CD4-positive, alpha-beta T cell (primary cell): ENCODE measurements at regions of chr22 and their contacts with region 1.

Region 1: DNA sequence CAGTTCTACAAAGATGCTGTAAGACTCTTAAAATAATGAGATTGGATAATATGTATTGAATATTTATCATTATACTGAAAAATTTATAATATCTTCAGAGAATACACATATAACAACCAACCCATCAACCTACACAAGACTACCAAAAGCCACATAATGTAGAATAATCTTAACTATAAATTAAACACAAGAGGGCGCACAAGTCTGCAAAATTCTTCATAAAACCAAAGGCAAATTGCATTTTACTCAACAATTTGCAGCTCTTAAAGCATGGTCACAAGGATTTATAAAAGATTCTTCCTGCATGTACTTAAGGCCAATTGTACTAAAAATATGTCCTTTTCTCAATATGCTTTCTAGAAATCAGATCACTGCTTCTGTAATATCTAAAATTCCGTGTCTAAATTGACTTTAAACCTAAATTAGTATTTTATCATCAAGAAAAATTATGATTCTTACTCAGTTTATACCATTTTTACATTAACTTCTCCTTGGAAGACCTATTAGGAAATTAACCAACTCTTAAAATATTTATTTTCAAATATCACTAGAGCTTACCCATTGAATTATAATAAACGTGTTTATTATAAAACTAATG is 79.0 kb downstream of the TTC28 start:
- DNase-seq: peak in 4 of 14 experiments; percentile 11 to 70 (median 66)
- ATAC-seq: no peak
- H3K4me3 ChIP-seq: no peak overlapping the region
- H3K4me3 Mint-ChIP-seq: no peak overlapping the region
- H3K27ac ChIP-seq: no peak overlapping the region
- H3K27ac Mint-ChIP-seq: no peak overlapping the region
- H3K4me1 ChIP-seq: no peaks in the 10 kb centered on the region
- H3K4me1 Mint-ChIP-seq: no peaks in the 10 kb centered on the region
- H3K27me3 ChIP-seq: peaks cover 0 to 12% of the 10 kb centered on the region in 2 experiments
- H3K27me3 Mint-ChIP-seq: peaks cover 46% of the 10 kb centered on the region
- CTCF ChIP-seq: peak; percentile 82

Region 2: DNA sequence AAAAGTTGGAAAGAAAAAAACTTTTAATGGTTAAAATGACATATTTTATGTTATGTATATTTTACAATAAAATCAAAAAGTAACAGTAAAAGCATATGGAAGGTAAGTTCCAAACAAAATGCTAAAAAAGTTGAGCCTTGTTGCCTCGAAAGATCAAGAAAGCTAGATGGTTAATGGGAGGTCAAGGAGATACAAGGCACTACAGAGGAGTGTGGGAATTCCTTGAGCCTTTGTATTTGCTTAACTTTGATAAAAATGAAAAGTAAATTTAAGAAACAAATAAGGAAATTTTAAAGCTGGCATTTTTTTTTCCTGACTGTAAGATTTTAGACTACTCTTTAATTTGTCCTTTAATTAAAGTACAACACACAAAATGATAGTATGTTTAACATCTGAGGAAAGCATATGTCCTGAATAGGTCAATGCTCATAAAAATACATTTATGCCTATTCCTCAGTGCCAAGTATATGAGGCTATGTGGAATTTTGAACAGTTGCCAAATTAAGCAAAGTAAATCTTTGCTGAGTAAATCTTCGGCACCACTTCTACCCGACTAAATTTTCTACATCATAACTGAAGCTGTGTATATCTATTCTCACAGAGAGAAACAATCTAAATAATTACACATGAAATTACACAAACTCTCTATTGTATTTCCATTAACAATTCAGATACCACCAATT is 29.8 kb before region 1 on chr22:
- CTCF ChIA-PET with region 1: no interaction called
- POLR2A ChIA-PET with region 1: no interaction called
- intact Hi-C with region 1: no loop called
- DNase-seq: no peak
- ATAC-seq: no peak
- H3K4me3 ChIP-seq: no peak overlapping the region
- H3K4me3 Mint-ChIP-seq: no peak overlapping the region
- H3K27ac ChIP-seq: no peak overlapping the region
- H3K27ac Mint-ChIP-seq: no peak overlapping the region
- H3K4me1 ChIP-seq: no peaks in the 10 kb centered on the region
- H3K4me1 Mint-ChIP-seq: no peaks in the 10 kb centered on the region
- H3K27me3 ChIP-seq: peaks cover 0 to 3% of the 10 kb centered on the region in 2 experiments
- H3K27me3 Mint-ChIP-seq: peaks cover 17% of the 10 kb centered on the region
- CTCF ChIP-seq: no peak

Region 3: GRCh38 chr22:28585324-28585723 is 15.3 kb before region 1 on chr22:
- CTCF ChIA-PET with region 1: no interaction called
- POLR2A ChIA-PET with region 1: no interaction called
- intact Hi-C with region 1: no loop called
- DNase-seq: no peak
- ATAC-seq: no peak
- H3K4me3 ChIP-seq: no peak overlapping the region
- H3K4me3 Mint-ChIP-seq: no peak overlapping the region
- H3K27ac ChIP-seq: no peak overlapping the region
- H3K27ac Mint-ChIP-seq: no peak overlapping the region
- H3K4me1 ChIP-seq: no peaks in the 10 kb centered on the region
- H3K4me1 Mint-ChIP-seq: no peaks in the 10 kb centered on the region
- H3K27me3 ChIP-seq: peaks cover 0 to 8% of the 10 kb centered on the region in 2 experiments
- H3K27me3 Mint-ChIP-seq: peaks cover 16% of the 10 kb centered on the region
- CTCF ChIP-seq: no peak

Region 4: GRCh38 chr22:28674121-28674563 is 73.5 kb after region 1 on chr22:
- CTCF ChIA-PET with region 1: no interaction called
- POLR2A ChIA-PET with region 1: no interaction called
- intact Hi-C with region 1: loop called in 1 of 2 experiments (anchors 5 kb)
- DNase-seq: peak in 8 of 14 experiments; percentile 8 to 85 (median 50)
- ATAC-seq: peak; percentile 97
- H3K4me3 ChIP-seq: no peak overlapping the region
- H3K4me3 Mint-ChIP-seq: peak overlapping the region; percentile 90
- H3K27ac ChIP-seq: no peak overlapping the region
- H3K27ac Mint-ChIP-seq: peak overlapping the region; percentile 96
- H3K4me1 ChIP-seq: peaks cover 14% of the 10 kb centered on the region
- H3K4me1 Mint-ChIP-seq: peaks cover 40% of the 10 kb centered on the region
- H3K27me3 ChIP-seq: peaks cover 35 to 71% of the 10 kb centered on the region in 2 experiments
- H3K27me3 Mint-ChIP-seq: peaks cover 74% of the 10 kb centered on the region
- CTCF ChIP-seq: no peak

Region 5: GRCh38 chr22:28783786-28784671 is 183.4 kb after region 1 on chr22:
- CTCF ChIA-PET with region 1: interaction called, 4 read pairs
- POLR2A ChIA-PET with region 1: no interaction called
- intact Hi-C with region 1: loop called in 1 of 2 experiments (anchors 2 kb)
- DNase-seq: no peak
- ATAC-seq: no peak
- H3K4me3 ChIP-seq: no peak overlapping the region
- H3K4me3 Mint-ChIP-seq: no peak overlapping the region
- H3K27ac ChIP-seq: no peak overlapping the region
- H3K27ac Mint-ChIP-seq: no peak overlapping the region
- H3K4me1 ChIP-seq: no peaks in the 10 kb centered on the region
- H3K4me1 Mint-ChIP-seq: peaks cover 20% of the 10 kb centered on the region
- H3K27me3 ChIP-seq: no peaks in the 10 kb centered on the region
- H3K27me3 Mint-ChIP-seq: no peaks in the 10 kb centered on the region
- CTCF ChIP-seq: no peak

Region 6: DNA sequence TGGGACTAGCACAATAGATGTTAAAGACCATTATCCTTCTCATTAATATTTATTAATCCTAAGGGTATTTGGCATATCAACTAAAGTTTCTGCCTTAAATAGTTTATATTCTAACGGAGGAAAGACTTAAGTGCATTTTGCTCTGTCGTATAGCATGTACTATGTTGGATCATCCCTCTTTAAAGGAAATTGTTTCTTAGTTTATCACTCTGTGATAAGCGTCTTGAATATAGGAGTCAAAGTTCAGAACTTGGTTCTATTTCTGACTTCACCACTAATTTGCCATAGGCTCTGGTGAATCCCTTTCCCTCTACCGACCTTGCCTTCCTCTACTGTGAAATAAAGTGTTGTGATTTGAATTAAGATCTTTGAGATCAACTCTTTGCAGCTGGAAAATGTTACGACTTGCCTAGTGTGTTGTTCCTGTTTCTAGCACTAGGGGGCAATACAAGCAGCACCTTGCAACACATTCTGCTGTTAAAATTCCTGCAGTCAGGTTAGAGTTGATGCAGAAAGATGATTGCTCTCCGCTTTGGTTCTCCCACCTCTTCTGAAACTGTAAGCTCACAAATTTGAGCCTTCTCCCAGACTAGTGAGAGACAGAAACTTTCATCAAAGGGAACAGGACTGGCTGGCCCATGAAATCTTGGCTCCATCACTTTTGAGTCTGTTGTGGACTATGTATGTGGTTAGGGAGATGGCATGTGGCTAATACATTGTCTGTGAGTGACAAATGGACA is 254.9 kb after region 1 on chr22:
- CTCF ChIA-PET with region 1: interaction called, 3 read pairs
- POLR2A ChIA-PET with region 1: no interaction called
- intact Hi-C with region 1: loop called in 1 of 2 experiments (anchors 1 kb)
- DNase-seq: peak in 12 of 14 experiments; percentile 4 to 81 (median 22)
- ATAC-seq: peak; percentile 55
- H3K4me3 ChIP-seq: no peak overlapping the region
- H3K4me3 Mint-ChIP-seq: no peak overlapping the region
- H3K27ac ChIP-seq: no peak overlapping the region
- H3K27ac Mint-ChIP-seq: no peak overlapping the region
- H3K4me1 ChIP-seq: no peaks in the 10 kb centered on the region
- H3K4me1 Mint-ChIP-seq: no peaks in the 10 kb centered on the region
- H3K27me3 ChIP-seq: peaks cover 0 to 3% of the 10 kb centered on the region in 2 experiments
- H3K27me3 Mint-ChIP-seq: peaks cover 24% of the 10 kb centered on the region
- CTCF ChIP-seq: peak; percentile 88

Region 7: DNA sequence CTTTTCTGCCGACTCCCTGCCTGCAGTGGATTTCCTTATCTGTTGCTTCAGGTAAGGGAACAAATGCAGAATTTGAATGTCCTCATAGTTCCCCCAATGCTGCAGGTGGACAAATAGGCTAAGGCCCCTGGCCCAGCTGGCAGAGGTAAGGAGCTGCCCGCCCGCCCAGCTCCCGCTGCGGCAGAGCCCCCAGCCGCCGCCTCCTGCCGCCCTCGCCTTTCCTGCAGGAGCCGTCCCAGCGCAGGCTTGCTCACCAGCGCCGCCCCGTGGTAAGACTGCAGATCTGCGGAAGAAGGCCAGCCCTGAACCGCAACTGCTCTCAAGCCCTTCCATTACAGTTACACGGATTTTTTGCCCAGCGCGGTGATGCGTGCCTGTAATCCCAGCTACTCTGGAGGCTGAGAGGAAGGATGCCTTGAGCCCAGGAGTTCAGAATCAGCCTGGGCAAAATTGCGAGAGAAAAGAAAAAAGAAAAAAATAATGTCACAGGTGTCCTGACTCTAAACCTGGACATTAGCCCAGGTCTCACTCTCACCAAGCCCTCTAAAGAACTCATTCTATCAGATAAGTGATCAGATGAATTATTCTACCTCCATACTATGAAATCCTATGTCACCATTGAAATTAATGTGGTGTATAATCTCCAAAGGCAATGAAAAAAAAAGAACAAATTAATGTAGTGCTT is 553.9 kb after region 1 on chr22:
- CTCF ChIA-PET with region 1: interaction called, 4 read pairs
- POLR2A ChIA-PET with region 1: no interaction called
- intact Hi-C with region 1: loop called in 1 of 2 experiments (anchors 2 kb)
- DNase-seq: peak; percentile 42 to 81 (median 63)
- ATAC-seq: peak; percentile 73
- H3K4me3 ChIP-seq: no peak overlapping the region
- H3K4me3 Mint-ChIP-seq: no peak overlapping the region
- H3K27ac ChIP-seq: no peak overlapping the region
- H3K27ac Mint-ChIP-seq: no peak overlapping the region
- H3K4me1 ChIP-seq: peaks cover 6% of the 10 kb centered on the region
- H3K4me1 Mint-ChIP-seq: peaks cover 8% of the 10 kb centered on the region
- H3K27me3 ChIP-seq: peaks cover 9 to 17% of the 10 kb centered on the region in 2 experiments
- H3K27me3 Mint-ChIP-seq: peaks cover 29% of the 10 kb centered on the region
- CTCF ChIP-seq: peak; percentile 75